PC-9 (cell line): ENCODE measurements at regions of chr7 and their contacts with region 1.

Region 1: GRCh38 chr7:143214789-143215679 is 6.8 kb upstream of the TAS2R40 start:
- DNase-seq: peak; percentile 61 to 76
- H3K4me3 ChIP-seq: no peak overlapping the region
- H3K27ac ChIP-seq: no peak overlapping the region
- H3K4me1 ChIP-seq: no peaks in the 10 kb centered on the region
- H3K27me3 ChIP-seq: no peaks in the 10 kb centered on the region
- CTCF ChIP-seq: peak; percentile 100

Region 2: DNA sequence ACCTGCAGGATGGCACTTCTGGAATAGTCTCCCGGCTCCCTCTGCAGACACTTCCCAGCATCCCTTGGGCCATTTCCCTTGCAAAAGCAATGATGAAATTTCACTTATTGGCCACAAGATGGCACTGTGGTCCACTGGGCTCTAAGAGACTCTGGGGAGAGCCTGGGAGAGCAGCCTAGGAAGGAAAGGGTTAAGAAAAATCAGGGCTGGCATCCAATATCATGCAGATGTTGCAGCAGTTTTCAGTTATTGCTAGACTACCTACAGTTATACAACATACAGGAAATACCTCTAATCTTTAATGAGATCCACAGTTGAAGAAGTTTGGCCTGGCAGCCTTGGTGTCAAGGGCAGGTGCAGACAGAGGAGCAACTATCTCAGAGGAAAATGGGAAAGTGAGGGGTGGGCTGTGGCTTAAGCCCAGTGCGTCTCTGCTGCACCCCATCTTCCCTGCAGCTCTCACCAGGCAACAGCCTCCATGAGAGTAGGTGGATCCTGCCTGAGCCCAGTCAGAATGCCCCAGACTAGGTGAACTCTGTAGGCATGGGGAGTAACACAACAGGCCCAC is 857.0 kb before region 1 on chr7:
- CTCF ChIA-PET with region 1: no interaction called
- POLR2A ChIA-PET with region 1: no interaction called
- intact Hi-C with region 1: loop called (anchors 1 kb)
- DNase-seq: peak; percentile 71 to 75
- H3K4me3 ChIP-seq: peak overlapping the region; percentile 27; the same call in 1 of the 2 replicates
- H3K27ac ChIP-seq: peak overlapping the region; percentile 0; the same call in 1 of the 2 replicates
- H3K4me1 ChIP-seq: peaks cover 28% of the 10 kb centered on the region
- H3K27me3 ChIP-seq: no peaks in the 10 kb centered on the region
- CTCF ChIP-seq: peak; percentile 98

Region 3: DNA sequence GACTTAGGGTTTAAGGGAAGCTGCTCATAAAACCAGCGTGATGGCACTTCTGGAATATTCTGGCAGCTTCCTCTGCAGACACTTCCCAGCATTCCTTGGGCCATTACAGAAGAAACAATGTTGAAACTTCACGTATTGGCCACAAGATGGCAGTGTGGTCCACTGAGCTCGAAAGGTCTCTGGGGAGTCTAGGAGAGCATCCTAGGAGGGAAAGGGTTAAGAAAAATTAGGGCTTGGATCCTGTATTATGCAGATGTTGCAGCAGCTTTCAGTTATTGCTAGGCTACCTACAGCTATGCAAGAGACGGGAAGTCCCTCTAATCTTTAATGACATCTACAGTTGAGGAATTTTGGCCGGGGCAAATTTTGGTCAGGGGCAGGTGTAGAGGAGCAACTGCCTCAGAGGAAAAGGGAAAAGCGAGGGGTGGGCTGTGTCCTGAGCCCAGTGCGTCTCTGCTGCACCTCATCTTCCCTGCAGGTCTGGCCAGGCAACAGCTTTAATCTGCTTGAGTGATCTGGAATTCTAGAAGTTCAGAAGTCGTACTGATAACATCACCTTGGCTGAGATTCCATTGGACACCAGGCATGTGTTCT is 736.5 kb before region 1 on chr7:
- CTCF ChIA-PET with region 1: no interaction called
- POLR2A ChIA-PET with region 1: no interaction called
- intact Hi-C with region 1: loop called (anchors 10 kb)
- DNase-seq: peak; percentile 58 to 74
- H3K4me3 ChIP-seq: no peak overlapping the region
- H3K27ac ChIP-seq: no peak overlapping the region
- H3K4me1 ChIP-seq: peaks cover 16% of the 10 kb centered on the region
- H3K27me3 ChIP-seq: no peaks in the 10 kb centered on the region
- CTCF ChIP-seq: peak; percentile 91

Region 4: GRCh38 chr7:142796608-142797385 is 418.2 kb before region 1 on chr7:
- CTCF ChIA-PET with region 1: no interaction called
- POLR2A ChIA-PET with region 1: interaction called, 3 read pairs
- intact Hi-C with region 1: loop called (anchors 5 kb)
- DNase-seq: peak; percentile 35 to 36
- H3K4me3 ChIP-seq: peak overlapping the region; percentile 93
- H3K27ac ChIP-seq: peak overlapping the region; percentile 92
- H3K4me1 ChIP-seq: peaks cover 55% of the 10 kb centered on the region
- H3K27me3 ChIP-seq: no peaks in the 10 kb centered on the region
- CTCF ChIP-seq: no peak

Region 5: GRCh38 chr7:143008007-143008901 is 206.8 kb before region 1 on chr7:
- CTCF ChIA-PET with region 1: interaction called, 54 read pairs
- POLR2A ChIA-PET with region 1: interaction called, 6 read pairs
- intact Hi-C with region 1: loop called (anchors 1 kb)
- DNase-seq: peak; percentile 55 to 80
- H3K4me3 ChIP-seq: no peak overlapping the region
- H3K27ac ChIP-seq: no peak overlapping the region
- H3K4me1 ChIP-seq: peaks cover 1% of the 10 kb centered on the region; the same call in 1 of the 2 replicates
- H3K27me3 ChIP-seq: no peaks in the 10 kb centered on the region
- CTCF ChIP-seq: peak; percentile 99

Region 6: GRCh38 chr7:143181349-143181748 is 33.7 kb before region 1 on chr7:
- CTCF ChIA-PET with region 1: no interaction called
- POLR2A ChIA-PET with region 1: no interaction called
- intact Hi-C with region 1: no loop called
- DNase-seq: no peak
- H3K4me3 ChIP-seq: no peak overlapping the region
- H3K27ac ChIP-seq: no peak overlapping the region
- H3K4me1 ChIP-seq: no peaks in the 10 kb centered on the region
- H3K27me3 ChIP-seq: no peaks in the 10 kb centered on the region
- CTCF ChIP-seq: no peak

Region 7: DNA sequence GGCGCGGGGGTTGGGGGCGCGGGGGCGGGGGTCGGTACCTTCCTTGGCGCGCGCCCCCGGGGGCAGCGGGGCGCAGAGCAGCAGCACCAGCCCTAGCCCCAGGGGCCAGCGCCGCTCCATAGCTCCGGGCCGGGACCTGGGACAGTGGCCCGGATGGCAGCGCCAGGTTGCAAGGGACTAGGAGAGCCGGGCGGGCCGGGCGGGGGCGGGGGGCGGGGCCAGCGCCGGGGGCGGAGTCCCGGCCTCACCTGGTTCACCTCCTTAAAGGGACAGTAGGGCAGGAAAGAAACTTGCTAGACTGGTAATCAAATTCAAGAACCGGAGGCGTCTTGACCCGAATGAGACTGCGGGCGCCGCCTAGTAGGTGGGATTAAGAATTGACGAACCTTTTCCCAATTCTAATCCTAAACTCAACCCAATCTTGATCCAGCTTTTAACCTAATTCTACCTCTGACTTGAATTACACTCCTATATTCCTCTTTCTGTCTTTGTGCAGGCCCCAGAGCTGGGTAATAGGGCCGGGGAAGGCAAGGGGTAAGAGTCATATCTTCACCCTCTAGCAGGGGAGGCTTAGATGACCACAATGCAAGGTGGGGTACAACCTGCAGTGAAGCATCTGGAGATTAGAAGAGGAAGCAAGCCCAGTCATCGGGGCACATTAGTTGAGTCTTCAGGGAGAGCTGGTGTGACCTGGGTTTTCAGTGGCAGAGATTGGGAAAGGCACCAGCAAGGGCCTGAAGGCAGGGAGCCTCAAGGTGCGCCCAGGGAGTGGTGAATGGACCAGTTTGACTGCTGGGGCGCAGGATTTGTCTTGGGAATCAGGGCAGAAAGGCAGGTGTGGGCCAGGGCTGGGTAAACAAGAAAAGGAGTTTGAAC is 193.9 kb after region 1 on chr7 and contains the start of gene EPHA1:
- CTCF ChIA-PET with region 1: interaction called, 4 read pairs
- POLR2A ChIA-PET with region 1: no interaction called
- intact Hi-C with region 1: loop called (anchors 5 kb)
- DNase-seq: peak; percentile 76 to 89
- H3K4me3 ChIP-seq: peak within 1 kb of the TSS; percentile 96
- H3K27ac ChIP-seq: peak within 1 kb of the TSS; percentile 33
- H3K4me1 ChIP-seq: peaks cover 23% of the 10 kb centered on the region
- H3K27me3 ChIP-seq: no peaks in the 10 kb centered on the region
- CTCF ChIP-seq: peak; percentile 83
- total RNA-seq, gene EPHA1: 35.5 and 39.3 TPM in 2 replicates